Transverse colon (tissue), 4 donors: ENCODE measurements at regions of chr6 and their contacts with region 1.

Region 1: GRCh38 chr6:78324213-78324612 is 543.1 kb upstream of the IRAK1BP1 start:
- DNase-seq: no peak
- H3K4me3 ChIP-seq: no peak overlapping the region
- H3K27ac ChIP-seq: no peak overlapping the region
- H3K4me1 ChIP-seq: no peaks in the 10 kb centered on the region
- H3K27me3 ChIP-seq: no peaks in the 10 kb centered on the region
- CTCF ChIP-seq: no peak
- EP300 ChIP-seq: no peak
- POLR2A ChIP-seq: no peak

Region 2: DNA sequence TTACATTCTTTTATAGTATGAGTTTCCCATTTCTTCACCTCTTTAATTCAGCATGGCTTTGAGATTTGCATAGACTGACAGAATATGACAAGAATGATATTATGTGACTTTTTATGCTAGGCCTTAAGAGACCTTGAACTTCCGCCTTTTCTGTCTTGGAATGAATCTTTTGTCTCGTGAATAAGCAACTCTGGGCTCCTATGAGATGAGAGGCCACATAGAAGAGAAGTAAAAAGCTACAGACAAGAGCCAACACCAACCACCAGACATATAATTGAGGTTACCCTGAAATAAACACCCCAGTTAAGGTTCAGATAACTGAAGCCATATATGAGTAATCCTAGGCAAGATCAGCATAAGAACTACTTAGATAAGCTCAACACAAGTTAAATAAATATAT is 70.6 kb before region 1 on chr6:
- in situ Hi-C with region 1: no loop called
- intact Hi-C with region 1: loop called (anchors 2 kb)
- DNase-seq: no peak
- H3K4me3 ChIP-seq: no peak overlapping the region
- H3K27ac ChIP-seq: no peak overlapping the region
- H3K4me1 ChIP-seq: no peaks in the 10 kb centered on the region
- H3K27me3 ChIP-seq: no peaks in the 10 kb centered on the region
- CTCF ChIP-seq: no peak
- EP300 ChIP-seq: no peak
- POLR2A ChIP-seq: no peak